ENCODE measurements at regions of chr1 and their contacts with region 1.

Region 1: GRCh38 chr1:183915625-183916510 is 110.9 kb downstream of the RGL1 start:
- DNase-seq: peak; percentile 72
- H3K4me3 Mint-ChIP-seq: no peak overlapping the region
- H3K27ac Mint-ChIP-seq: peak overlapping the region; percentile 21
- H3K4me1 Mint-ChIP-seq: peaks cover 32% of the 10 kb centered on the region
- H3K27me3 Mint-ChIP-seq: no peaks in the 10 kb centered on the region

Region 2: DNA sequence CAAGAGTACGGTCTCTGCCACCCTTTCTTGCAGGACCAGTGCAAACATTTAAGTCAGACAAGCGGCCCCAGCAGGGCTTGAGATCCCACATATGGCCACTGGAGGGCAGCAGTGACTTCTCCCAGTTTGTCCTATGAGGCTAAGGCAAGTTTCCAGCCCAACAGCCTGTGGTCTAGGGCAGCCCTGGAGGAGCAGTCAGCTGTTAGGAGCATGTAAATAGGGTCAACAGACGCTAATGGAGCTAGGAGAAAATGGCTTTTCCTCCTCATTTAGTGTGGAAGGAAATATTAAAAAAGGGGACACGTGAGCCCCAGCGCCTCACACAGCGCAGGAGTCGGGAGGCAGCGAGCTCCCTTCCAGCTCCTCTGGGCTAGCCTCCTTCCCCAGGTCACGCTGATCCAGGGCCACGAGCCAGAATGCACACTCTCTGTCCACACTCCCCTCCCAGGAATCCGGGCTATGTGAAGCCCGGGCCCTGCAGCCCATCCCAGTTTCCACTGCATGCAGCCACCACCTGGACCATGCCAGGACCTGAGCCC is 634.2 kb before region 1 on chr1:
- intact Hi-C with region 1: loop called (anchors 5 kb)
- DNase-seq: peak; percentile 53
- H3K4me3 Mint-ChIP-seq: no peak overlapping the region
- H3K27ac Mint-ChIP-seq: no peak overlapping the region
- H3K4me1 Mint-ChIP-seq: no peaks in the 10 kb centered on the region
- H3K27me3 Mint-ChIP-seq: peaks cover 2% of the 10 kb centered on the region

Region 3: GRCh38 chr1:183635606-183636333 is 280.1 kb before region 1 on chr1 and contains the start of gene ARPC5:
- intact Hi-C with region 1: loop called (anchors 1 kb)
- DNase-seq: peak; percentile 96
- H3K4me3 Mint-ChIP-seq: peak within 1 kb of the TSS; percentile 100
- H3K27ac Mint-ChIP-seq: peak within 1 kb of the TSS; percentile 100
- H3K4me1 Mint-ChIP-seq: peaks cover 34% of the 10 kb centered on the region
- H3K27me3 Mint-ChIP-seq: peaks cover 11% of the 10 kb centered on the region
- total RNA-seq, gene ARPC5: 160 and 169 TPM in 2 replicates

Region 4: DNA sequence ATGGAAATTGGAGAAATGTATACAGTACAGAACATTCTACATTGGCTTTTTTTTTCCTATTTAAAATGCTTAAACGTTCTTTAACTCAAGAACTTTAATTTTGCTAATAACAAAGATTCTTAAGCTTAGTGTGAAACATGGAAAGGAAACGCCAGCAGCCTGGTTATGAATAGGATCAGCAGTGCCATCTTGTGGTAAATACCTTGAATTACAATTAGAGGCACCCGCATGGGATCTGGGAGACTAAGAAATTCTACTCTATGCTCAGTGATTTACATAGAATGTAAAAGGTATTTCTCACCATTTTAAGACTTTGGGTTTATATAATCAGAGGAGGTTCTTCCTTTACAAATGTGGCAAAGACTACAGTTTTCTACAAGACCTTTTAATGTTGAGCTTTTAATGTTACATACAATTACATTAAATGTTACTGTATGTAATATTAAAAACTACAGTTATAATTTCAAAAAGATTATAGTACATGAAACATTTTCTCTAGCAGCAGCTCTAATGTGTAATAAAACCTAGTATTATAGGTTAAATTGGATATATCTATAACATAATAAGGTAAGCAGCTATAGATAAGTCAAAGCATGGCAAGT is 230.7 kb before region 1 on chr1:
- intact Hi-C with region 1: loop called (anchors 1 kb)
- DNase-seq: no peak
- H3K4me3 Mint-ChIP-seq: no peak overlapping the region
- H3K27ac Mint-ChIP-seq: no peak overlapping the region
- H3K4me1 Mint-ChIP-seq: peaks cover 1% of the 10 kb centered on the region
- H3K27me3 Mint-ChIP-seq: peaks cover 34% of the 10 kb centered on the region

Region 5: DNA sequence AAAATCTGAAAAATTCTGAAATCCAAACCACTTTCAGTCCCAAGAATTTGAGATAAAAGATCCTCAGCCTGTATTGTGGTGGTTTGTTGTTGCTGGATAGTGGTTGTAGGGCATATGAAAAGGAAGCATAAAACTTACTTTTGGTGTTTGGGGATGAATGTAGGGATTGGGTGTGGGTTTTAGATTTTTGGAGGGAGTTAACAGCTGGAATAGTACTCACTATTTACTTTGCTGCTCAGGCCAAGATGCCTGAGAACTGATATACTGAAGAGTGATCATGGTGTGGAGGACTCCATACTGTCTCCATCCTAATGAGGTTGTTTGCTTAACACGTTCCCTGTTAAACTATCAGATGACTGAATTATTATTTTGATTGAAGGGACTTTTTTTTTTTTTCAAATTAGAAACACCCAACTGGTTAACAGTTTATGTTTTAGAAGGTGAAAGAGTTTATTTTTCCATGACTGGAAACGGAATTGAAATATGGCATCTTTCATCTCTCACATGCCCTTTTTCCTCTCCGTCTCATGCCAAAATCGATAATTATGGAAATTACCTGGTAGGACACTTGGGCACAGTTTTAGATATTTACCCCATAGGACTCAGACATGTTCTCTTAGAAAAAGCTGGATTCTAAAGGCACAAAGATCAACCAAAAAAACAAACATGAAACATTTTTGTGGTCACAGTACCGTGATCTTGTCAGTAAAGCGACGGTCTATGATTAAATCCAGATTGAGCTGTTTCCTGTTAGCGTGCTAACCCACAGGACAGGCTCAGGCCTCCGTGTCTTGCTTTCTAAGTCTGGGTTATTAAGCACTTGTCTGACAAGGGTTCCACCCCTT is 73.7 kb before region 1 on chr1:
- intact Hi-C with region 1: loop called (anchors 1 kb)
- DNase-seq: peak; percentile 12
- H3K4me3 Mint-ChIP-seq: peak overlapping the region; percentile 73
- H3K27ac Mint-ChIP-seq: peak overlapping the region; percentile 89
- H3K4me1 Mint-ChIP-seq: peaks cover 32% of the 10 kb centered on the region
- H3K27me3 Mint-ChIP-seq: no peaks in the 10 kb centered on the region

Region 6: GRCh38 chr1:183901748-183902330 is 14.0 kb before region 1 on chr1:
- intact Hi-C with region 1: loop called (anchors 1 kb)
- DNase-seq: no peak
- H3K4me3 Mint-ChIP-seq: no peak overlapping the region
- H3K27ac Mint-ChIP-seq: peak overlapping the region; percentile 71
- H3K4me1 Mint-ChIP-seq: peaks cover 21% of the 10 kb centered on the region
- H3K27me3 Mint-ChIP-seq: no peaks in the 10 kb centered on the region

Region 7: DNA sequence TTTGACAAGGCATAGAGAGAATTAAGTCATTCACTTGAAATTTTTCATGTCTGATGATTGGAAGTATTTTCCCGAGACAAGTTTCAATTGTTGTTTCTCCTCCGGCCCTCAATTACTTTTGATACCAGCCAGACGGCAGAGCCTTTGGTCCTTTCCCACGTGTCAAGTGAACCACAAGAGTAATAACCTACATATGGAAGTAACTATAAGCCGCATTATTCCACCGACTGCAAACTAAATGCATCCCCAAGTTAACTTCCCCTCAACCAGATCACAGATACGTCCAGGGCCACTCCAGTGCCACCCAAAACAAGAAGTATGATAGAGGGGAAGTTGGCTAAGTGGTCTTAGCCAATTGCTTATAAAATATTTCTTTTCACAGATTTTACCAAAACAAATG is 101.4 kb after region 1 on chr1:
- intact Hi-C with region 1: no loop called
- DNase-seq: no peak
- H3K4me3 Mint-ChIP-seq: no peak overlapping the region
- H3K27ac Mint-ChIP-seq: no peak overlapping the region
- H3K4me1 Mint-ChIP-seq: no peaks in the 10 kb centered on the region
- H3K27me3 Mint-ChIP-seq: peaks cover 57% of the 10 kb centered on the region

Region 8: DNA sequence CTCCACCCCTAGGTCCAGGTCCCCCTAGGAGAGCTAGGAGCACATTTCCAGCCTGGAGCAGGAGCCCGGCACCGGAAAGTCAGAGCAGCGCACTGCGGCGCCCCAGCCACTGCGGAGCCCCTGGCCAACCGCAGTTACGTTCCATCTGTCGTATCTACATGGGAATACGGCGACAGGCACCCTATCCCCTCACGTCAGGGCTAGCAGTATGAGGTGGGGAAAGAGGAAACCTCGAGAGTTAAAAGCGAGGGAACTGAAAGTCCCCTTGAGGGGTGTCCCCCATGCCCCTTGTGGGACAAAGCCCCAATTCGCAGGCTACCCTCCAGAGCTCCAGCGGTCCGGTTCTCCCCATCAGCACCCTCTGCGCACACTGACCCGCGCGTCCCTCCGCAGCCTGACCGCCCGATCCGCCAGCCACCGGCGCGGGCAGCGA is 120.7 kb after region 1 on chr1:
- intact Hi-C with region 1: loop called (anchors 5 kb)
- DNase-seq: no peak
- H3K4me3 Mint-ChIP-seq: peak overlapping the region; percentile 48
- H3K27ac Mint-ChIP-seq: no peak overlapping the region
- H3K4me1 Mint-ChIP-seq: peaks cover 19% of the 10 kb centered on the region
- H3K27me3 Mint-ChIP-seq: peaks cover 74% of the 10 kb centered on the region